ENCODE measurements at regions of chr7 and their contacts with region 1.

Region 1: DNA sequence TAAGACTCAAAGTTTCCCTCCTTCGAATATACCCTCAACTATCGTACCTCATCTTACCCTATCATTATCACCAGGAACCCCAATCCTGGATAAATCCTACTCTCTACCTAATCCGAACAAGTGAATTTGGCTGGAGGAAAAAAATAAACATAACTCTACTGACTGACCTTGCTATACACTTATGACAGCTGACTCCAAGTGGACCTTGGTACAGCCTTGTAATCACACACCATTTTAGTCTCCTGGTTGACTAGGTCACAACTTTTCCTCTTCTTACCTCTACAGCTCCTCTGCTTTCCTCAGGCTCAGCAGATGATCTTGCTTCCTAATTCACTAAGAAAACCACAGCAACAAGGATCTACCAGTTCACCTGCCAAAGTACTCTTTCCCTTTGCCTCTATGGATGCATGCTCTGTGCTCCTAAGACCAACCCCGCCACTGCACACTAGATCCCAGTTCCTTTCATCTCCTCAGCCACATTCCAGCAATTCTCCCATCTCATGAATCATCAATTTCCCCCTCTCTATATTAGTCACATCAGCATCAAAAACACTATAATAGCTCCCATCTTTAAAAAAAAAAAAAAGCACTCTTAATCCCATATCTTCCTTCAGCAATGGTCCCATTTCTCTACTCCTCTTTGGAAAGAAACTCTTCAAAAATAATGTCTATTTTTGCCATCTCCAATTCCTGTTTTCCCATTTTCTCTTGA is 35.5 kb downstream of the COA1 start:
- DNase-seq: no peak
- CTCF ChIP-seq: no peak

Region 2: GRCh38 chr7:43501870-43502269 is 192.0 kb before region 1 on chr7:
- in situ Hi-C with region 1: no loop called
- DNase-seq: no peak
- CTCF ChIP-seq: no peak

Region 3: GRCh38 chr7:43582503-43583423 is 111.1 kb before region 1 on chr7 and contains the start of gene STK17A:
- in situ Hi-C with region 1: loop called (anchors 10 kb)
- DNase-seq: peak; percentile 95
- CTCF ChIP-seq: peak; percentile 100